ENCODE measurements at regions of chr2 and their contacts with region 1.

Region 1: GRCh38 chr2:85648619-85649018 is 19.4 kb downstream of the SFTPB start:
- DNase-seq: peak; percentile 66
- H3K4me3 ChIP-seq: no peak overlapping the region
- H3K27ac ChIP-seq: peak overlapping the region; percentile 42
- H3K4me1 ChIP-seq: peaks cover 16% of the 10 kb centered on the region
- H3K27me3 ChIP-seq: no peaks in the 10 kb centered on the region
- CTCF ChIP-seq: peak; percentile 65 to 72
- POLR2A ChIP-seq: no peak

Region 2: GRCh38 chr2:85475799-85476490 is 172.7 kb before region 1 on chr2:
- CTCF ChIA-PET with region 1: no interaction called
- POLR2A ChIA-PET with region 1: no interaction called
- dilution Hi-C with region 1: no loop called
- intact Hi-C with region 1: no loop called
- DNase-seq: no peak
- H3K4me3 ChIP-seq: no peak overlapping the region
- H3K27ac ChIP-seq: no peak overlapping the region
- H3K4me1 ChIP-seq: no peaks in the 10 kb centered on the region
- H3K27me3 ChIP-seq: no peaks in the 10 kb centered on the region
- CTCF ChIP-seq: no peak
- POLR2A ChIP-seq: no peak

Region 3: GRCh38 chr2:85635636-85636035 is 13.0 kb before region 1 on chr2:
- CTCF ChIA-PET with region 1: interaction called, 78 read pairs
- POLR2A ChIA-PET with region 1: no interaction called
- dilution Hi-C with region 1: no loop called
- intact Hi-C with region 1: no loop called
- DNase-seq: no peak
- H3K4me3 ChIP-seq: no peak overlapping the region
- H3K27ac ChIP-seq: no peak overlapping the region
- H3K4me1 ChIP-seq: no peaks in the 10 kb centered on the region
- H3K27me3 ChIP-seq: no peaks in the 10 kb centered on the region
- CTCF ChIP-seq: no peak
- POLR2A ChIP-seq: no peak

Region 4: GRCh38 chr2:85678794-85679672 is 30.4 kb after region 1 on chr2:
- CTCF ChIA-PET with region 1: interaction called, 24 read pairs
- POLR2A ChIA-PET with region 1: no interaction called
- dilution Hi-C with region 1: no loop called
- intact Hi-C with region 1: loop called (anchors 2 kb)
- DNase-seq: peak; percentile 86
- H3K4me3 ChIP-seq: no peak overlapping the region
- H3K27ac ChIP-seq: no peak overlapping the region
- H3K4me1 ChIP-seq: peaks cover 25% of the 10 kb centered on the region
- H3K27me3 ChIP-seq: no peaks in the 10 kb centered on the region
- CTCF ChIP-seq: peak; percentile 98
- POLR2A ChIP-seq: no peak

Region 5: GRCh38 chr2:85712849-85713602 is 64.4 kb after region 1 on chr2:
- CTCF ChIA-PET with region 1: interaction called, 138 read pairs
- POLR2A ChIA-PET with region 1: no interaction called
- dilution Hi-C with region 1: no loop called
- intact Hi-C with region 1: no loop called
- DNase-seq: peak; percentile 30
- H3K4me3 ChIP-seq: no peak overlapping the region
- H3K27ac ChIP-seq: no peak overlapping the region
- H3K4me1 ChIP-seq: peaks cover 9% of the 10 kb centered on the region
- H3K27me3 ChIP-seq: peaks cover 2% of the 10 kb centered on the region in 2 experiments
- CTCF ChIP-seq: no peak
- POLR2A ChIP-seq: no peak

Region 6: DNA sequence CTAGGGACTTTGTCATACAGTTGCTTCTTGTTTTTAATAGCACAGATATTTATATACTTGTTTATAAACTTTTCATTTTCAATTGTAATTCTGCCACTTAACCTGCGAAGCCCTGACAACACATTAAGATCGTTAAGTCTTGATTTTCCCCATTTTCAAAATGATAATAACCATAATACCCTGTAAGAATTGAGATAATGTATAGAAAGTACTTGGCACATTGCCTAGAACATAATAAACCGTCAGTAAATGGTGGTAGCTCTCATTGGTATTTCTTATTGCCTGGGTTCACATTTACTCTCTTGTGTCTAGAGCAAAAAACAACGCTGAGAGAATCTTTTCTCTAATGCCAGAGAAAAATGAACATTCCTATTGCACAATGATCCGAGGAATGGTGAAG is 476.1 kb after region 1 on chr2:
- CTCF ChIA-PET with region 1: no interaction called
- POLR2A ChIA-PET with region 1: no interaction called
- dilution Hi-C with region 1: no loop called
- intact Hi-C with region 1: loop called (anchors 10 kb)
- DNase-seq: no peak
- H3K4me3 ChIP-seq: no peak overlapping the region
- H3K27ac ChIP-seq: no peak overlapping the region
- H3K4me1 ChIP-seq: peaks cover 3% of the 10 kb centered on the region
- H3K27me3 ChIP-seq: no peaks in the 10 kb centered on the region
- CTCF ChIP-seq: no peak
- POLR2A ChIP-seq: no peak

Measured in endothelial cell of umbilical vein (primary cell).